ENCODE measurements at regions of chr1 and their contacts with region 1.

Region 1: DNA sequence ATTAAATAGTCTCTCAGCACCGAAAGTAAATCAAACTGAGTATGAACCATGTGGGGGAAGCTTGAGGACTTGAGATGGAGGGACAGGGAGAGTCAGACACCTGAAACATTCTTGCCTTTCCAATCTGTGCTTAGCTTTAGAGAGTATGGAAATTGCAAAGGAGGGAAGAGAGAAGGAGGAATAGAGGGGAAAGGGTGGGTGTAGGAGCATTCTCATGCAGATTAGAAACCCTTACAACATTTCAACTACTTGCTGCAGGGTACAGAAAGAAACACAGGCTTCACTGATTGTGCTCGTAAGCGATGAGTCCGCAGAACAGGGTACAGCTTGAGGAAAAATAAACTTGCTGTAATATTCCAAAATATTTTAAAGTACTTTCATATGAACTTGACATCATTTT is 73.8 kb downstream of the NIBAN1 start:
- DNase-seq: no peak
- H3K4me3 ChIP-seq: no peak overlapping the region
- H3K27ac ChIP-seq: no peak overlapping the region
- H3K4me1 ChIP-seq: no peaks in the 10 kb centered on the region
- H3K27me3 ChIP-seq: no peaks in the 10 kb centered on the region
- CTCF ChIP-seq: no peak
- EP300 ChIP-seq: no peak
- POLR2A ChIP-seq: no peak

Region 2: DNA sequence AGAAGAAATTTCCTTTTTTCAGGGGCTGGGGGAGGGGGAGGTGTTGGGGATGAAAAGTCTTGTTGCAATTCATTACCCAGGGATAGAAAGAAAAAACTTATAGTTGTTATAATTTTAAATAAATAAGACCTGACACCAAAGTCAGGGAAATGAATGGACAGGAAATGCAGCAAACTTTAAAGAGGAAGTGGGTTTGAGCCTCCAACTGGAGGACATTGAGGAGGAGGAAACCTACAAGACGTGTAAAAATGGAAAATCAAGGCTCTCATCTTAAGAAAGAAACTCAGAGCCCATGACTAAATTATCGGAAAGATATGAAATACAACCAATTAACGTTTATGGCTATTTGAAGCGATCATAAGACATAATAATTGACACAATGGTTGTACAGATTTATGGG is 19.4 kb after region 1 on chr1:
- intact Hi-C with region 1: loop called in 1 of 4 experiments (anchors 2 kb)
- DNase-seq: no peak
- H3K4me3 ChIP-seq: no peak overlapping the region
- H3K27ac ChIP-seq: no peak overlapping the region
- H3K4me1 ChIP-seq: no peaks in the 10 kb centered on the region
- H3K27me3 ChIP-seq: no peaks in the 10 kb centered on the region
- CTCF ChIP-seq: no peak
- EP300 ChIP-seq: no peak
- POLR2A ChIP-seq: no peak

Region 3: GRCh38 chr1:184958554-184959353 is 58.2 kb after region 1 on chr1:
- intact Hi-C with region 1: no loop called
- DNase-seq: no peak
- H3K4me3 ChIP-seq: no peak overlapping the region
- H3K27ac ChIP-seq: no peak overlapping the region
- H3K4me1 ChIP-seq: no peaks in the 10 kb centered on the region
- H3K27me3 ChIP-seq: no peaks in the 10 kb centered on the region
- CTCF ChIP-seq: no peak
- EP300 ChIP-seq: no peak
- POLR2A ChIP-seq: no peak

Measured in ovary (tissue), 10 donors.